ENCODE measurements at regions of chr1 and their contacts with region 1.

Region 1: DNA sequence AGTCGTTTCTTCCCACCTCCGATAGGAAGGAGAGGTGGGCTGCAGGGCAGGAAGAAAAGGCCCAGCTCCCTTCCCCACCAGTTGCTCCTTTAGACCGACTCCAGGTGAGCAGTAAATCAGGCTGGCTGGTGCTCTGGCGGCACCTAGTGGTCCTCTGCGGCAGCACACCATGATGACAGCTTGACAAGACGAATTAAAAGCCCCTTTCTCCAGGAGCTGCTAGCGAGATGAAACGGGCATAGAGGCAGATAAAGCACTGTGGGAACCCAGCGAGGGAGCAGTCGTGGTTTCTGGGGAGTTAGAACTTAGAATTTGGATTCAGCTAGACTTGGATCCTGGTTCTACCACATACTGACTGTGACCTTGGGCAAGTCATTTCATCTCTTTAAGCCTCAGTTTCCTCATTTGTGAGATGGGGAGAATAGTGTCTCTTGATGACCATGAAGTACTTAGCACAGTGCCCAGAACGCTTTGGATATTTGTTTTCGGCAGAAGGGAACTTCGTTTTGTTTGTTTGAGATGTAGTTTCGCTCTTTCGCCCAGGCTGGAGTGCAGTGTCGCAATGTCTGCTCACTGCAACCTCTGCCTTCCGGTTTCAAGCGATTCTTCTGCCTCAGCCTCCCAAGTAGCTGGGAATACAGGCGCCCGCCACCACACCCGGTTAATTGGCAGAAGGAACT is 21.8 kb upstream of the COL9A2 start:
- DNase-seq: peak; percentile 84
- H3K4me3 Mint-ChIP-seq: peak overlapping the region; percentile 38
- H3K27ac Mint-ChIP-seq: peak overlapping the region; percentile 75
- H3K4me1 Mint-ChIP-seq: peaks cover 53% of the 10 kb centered on the region
- H3K27me3 Mint-ChIP-seq: no peaks in the 10 kb centered on the region

Region 2: DNA sequence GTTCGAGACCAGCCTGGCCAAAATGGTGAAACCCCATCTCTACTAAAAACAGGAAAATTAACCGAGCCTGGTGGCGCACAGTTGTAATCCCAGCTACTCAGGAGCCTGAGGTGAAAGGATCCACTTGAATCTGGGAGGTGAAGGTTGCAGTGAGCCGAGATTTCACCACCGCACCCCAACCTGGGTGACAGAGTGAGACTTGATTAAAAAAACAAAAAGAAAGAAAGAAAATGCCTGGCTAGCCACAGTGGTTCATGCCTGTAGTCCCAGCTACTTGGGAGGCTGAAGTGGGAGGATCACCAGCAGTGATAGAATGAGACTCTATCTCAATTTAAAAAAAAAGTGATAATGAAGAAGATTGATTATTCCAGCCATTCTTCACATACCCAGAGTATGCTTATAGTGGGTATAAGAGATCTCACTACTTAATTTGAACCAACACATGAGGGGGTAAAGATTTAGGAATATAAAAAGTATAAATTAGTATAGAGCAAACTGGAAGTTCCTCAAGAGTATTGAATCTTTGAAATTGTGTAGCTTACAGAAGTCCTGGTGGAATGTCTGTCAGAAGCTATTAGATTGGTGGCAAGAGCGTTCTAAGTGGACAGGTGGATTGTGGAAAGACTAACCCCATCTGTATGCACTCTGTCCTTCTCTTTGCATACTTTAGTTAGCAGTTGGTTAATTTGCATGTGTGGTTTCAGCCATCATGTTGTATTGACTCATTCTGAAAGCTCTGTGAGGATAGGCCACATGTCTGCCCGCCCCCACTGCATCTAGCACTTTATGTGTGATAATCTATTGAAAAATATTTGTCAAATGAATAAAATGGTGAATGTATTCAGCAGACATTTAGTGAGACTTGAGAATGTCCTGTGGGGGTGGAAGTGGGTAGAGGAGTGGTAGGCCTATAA is 152.7 kb before region 1 on chr1:
- intact Hi-C with region 1: no loop called
- DNase-seq: peak; percentile 21
- H3K4me3 Mint-ChIP-seq: peak overlapping the region; percentile 72
- H3K27ac Mint-ChIP-seq: peak overlapping the region; percentile 69
- H3K4me1 Mint-ChIP-seq: peaks cover 62% of the 10 kb centered on the region
- H3K27me3 Mint-ChIP-seq: no peaks in the 10 kb centered on the region

Region 3: DNA sequence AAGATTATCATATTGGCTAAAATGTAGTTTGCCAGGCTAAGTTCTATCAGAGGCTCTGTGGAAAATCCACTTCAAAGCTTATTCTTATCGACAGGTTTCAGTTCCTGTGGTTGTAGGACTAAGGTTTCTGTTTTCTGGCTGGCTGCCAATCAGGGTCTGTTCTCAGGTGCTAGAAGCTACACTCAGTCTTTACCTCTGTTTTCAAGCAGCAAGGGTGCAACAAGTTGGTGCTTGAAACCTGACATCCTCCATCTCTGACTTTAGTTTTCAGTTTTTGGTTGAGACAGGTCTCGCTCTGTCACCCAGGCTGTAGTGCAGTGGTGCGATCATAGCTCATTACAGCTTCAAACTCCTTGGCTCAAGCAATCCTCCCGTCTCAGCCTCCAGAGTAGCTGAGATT is 106.4 kb before region 1 on chr1:
- intact Hi-C with region 1: loop called (anchors 2 kb)
- DNase-seq: peak; percentile 71
- H3K4me3 Mint-ChIP-seq: peak overlapping the region; percentile 47
- H3K27ac Mint-ChIP-seq: peak overlapping the region; percentile 68
- H3K4me1 Mint-ChIP-seq: peaks cover 45% of the 10 kb centered on the region
- H3K27me3 Mint-ChIP-seq: no peaks in the 10 kb centered on the region

Region 4: DNA sequence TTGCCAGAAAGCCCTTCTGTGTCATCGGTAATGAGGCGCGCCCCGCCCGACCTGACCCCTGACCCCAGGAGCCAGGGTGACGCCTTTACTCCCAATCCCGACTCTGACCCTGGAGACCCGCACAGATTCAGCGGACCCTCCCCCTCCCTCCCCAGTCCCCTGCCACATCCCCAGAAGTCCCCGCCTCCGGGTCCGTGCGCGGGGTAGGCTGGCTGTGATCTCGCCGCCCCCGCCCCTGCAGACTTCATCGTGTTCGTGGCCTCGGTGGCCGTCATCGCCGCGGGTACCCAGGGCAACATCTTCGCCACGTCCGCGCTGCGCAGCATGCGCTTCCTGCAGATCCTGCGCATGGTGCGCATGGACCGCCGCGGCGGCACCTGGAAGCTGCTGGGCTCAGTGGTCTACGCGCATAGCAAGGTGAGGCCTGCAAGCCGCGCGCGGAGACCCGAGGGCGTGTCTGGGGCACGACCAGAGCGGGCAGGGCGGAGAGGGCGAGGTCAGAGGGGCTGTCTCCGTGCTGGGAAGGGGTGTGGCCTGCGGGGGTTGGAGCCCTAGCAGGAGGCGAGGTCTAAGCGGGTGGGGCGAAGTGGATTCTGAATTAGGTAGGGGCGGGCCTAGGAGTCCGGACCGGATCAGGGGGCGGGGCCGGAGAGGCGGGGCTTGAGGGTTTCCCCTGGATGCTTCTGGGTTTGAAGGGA is 479.5 kb after region 1 on chr1:
- intact Hi-C with region 1: no loop called
- DNase-seq: peak; percentile 89
- H3K4me3 Mint-ChIP-seq: peak overlapping the region; percentile 66
- H3K27ac Mint-ChIP-seq: peak overlapping the region; percentile 52
- H3K4me1 Mint-ChIP-seq: peaks cover 4% of the 10 kb centered on the region
- H3K27me3 Mint-ChIP-seq: peaks cover 9% of the 10 kb centered on the region

Measured in activated T-helper 1 cell treated with anti-CD3 and anti-CD28 coated beads, Interleukin-12 subunit alpha, Interleukin-12 subunit beta, Interleukin-2, Interleukin-4 antibody, amounts not matched to agents 30 ng/mL and 10 ng/mL and 1 ng/mL, durations not matched to agents 14 hours and 24 hours and 36 hours (primary cell).